ENCODE measurements at regions of chr7 and their contacts with region 1.

Region 1: GRCh38 chr7:155598810-155599210 is 45.7 kb upstream of the RBM33 start:
- DNase-seq: no peak
- H3K4me3 ChIP-seq: no peak overlapping the region
- H3K27me3 ChIP-seq: peaks cover 4% of the 10 kb centered on the region
- CTCF ChIP-seq: peak; percentile 98

Region 2: GRCh38 chr7:154566877-154567276 is 1031.9 kb before region 1 on chr7:
- CTCF ChIA-PET with region 1: no interaction called
- POLR2A ChIA-PET with region 1: no interaction called
- DNase-seq: no peak
- H3K4me3 ChIP-seq: no peak overlapping the region
- H3K27me3 ChIP-seq: no peaks in the 10 kb centered on the region
- CTCF ChIP-seq: no peak

Region 3: GRCh38 chr7:155566011-155566836 is 32.6 kb before region 1 on chr7:
- CTCF ChIA-PET with region 1: no interaction called
- POLR2A ChIA-PET with region 1: no interaction called
- DNase-seq: no peak
- H3K4me3 ChIP-seq: no peak overlapping the region
- H3K27me3 ChIP-seq: 0 out of 2 replicates have a peak, but pooled peaks cover 1% of the 10 kb centered on the region
- CTCF ChIP-seq: no peak

Region 4: GRCh38 chr7:155584763-155585531 is 13.9 kb before region 1 on chr7:
- CTCF ChIA-PET with region 1: interaction called, 36 read pairs
- POLR2A ChIA-PET with region 1: no interaction called
- DNase-seq: peak; percentile 15
- H3K4me3 ChIP-seq: no peak overlapping the region
- H3K27me3 ChIP-seq: peaks cover 2% of the 10 kb centered on the region
- CTCF ChIP-seq: 0 out of 2 replicates have a peak, but pooled peaks have one; percentile 4

Region 5: DNA sequence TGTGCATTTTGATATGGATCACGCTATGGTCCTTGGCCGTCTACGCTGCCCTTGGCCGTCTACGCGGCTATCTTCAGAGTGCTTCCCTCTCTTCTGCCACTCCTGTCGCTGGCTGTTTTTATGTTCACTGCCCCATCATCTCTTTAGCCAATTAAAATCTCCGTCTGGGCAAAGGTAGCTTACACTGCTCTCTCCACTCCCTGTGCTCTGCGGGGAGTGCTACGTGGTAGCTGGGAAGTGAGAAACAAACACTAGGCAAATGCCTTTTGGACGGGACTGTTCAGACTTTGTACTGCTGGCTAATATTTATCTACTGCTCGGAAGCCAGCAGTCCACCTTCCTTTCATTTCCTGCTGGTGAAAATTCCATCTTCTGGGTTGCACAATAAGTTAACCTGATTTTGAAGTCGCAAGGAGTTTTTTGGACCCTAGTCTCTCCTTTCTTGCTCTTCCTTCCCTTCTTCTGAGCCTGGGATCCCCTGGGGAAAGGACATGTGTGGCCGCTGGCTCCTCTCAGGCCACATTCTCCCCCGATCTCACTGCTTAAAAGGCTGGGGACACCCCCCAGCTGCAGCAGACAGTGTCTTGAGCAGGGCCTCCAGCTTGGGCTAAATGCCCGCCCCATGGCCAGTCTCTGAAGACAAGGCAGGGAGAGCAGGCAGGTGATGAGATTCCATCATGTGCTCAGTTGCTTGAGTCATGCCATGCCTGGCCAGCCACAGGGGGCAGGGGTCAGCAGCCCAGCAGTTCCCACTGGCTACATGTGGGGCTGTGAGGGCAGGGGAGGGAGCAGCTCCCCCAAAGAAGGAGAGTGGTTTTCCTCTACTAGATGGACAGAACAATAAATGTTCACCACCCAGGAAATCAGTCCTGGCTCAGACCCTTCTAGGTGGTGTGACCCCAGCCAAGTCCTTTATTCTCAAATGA is 20.2 kb after region 1 on chr7:
- CTCF ChIA-PET with region 1: interaction called, 19 read pairs
- POLR2A ChIA-PET with region 1: no interaction called
- DNase-seq: no peak
- H3K4me3 ChIP-seq: no peak overlapping the region
- H3K27me3 ChIP-seq: peaks cover 2% of the 10 kb centered on the region
- CTCF ChIP-seq: no peak

Region 6: DNA sequence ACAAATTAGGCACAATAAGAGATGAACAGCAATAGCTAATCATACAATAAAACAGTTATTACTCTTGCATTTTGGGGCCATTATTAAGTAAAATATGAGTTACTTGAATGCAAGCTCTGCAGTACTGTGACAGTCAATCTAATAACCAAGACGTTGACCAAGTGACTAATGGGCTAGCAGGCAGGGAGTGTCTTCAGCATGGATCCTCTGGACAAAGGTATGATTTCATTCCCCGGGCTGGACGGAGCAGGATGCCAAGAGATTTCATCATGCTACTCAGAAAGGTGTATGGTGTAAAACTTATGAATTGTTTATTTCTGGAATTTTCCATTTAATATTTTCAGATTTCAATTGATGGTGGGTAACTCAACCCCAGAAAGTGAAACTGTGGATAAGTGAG is 132.6 kb after region 1 on chr7:
- CTCF ChIA-PET with region 1: interaction called, 104 read pairs
- POLR2A ChIA-PET with region 1: no interaction called
- DNase-seq: no peak
- H3K4me3 ChIP-seq: no peak overlapping the region
- H3K27me3 ChIP-seq: no peaks in the 10 kb centered on the region
- CTCF ChIP-seq: no peak

Region 7: GRCh38 chr7:155762655-155763054 is 163.8 kb after region 1 on chr7:
- CTCF ChIA-PET with region 1: interaction called, 40 read pairs
- POLR2A ChIA-PET with region 1: no interaction called
- DNase-seq: no peak
- H3K4me3 ChIP-seq: no peak overlapping the region
- H3K27me3 ChIP-seq: no peaks in the 10 kb centered on the region
- CTCF ChIP-seq: no peak

Region 8: GRCh38 chr7:155796381-155797261 is 197.8 kb after region 1 on chr7:
- CTCF ChIA-PET with region 1: no interaction called
- POLR2A ChIA-PET with region 1: no interaction called
- DNase-seq: no peak
- H3K4me3 ChIP-seq: no peak overlapping the region
- H3K27me3 ChIP-seq: peaks cover 10% of the 10 kb centered on the region
- CTCF ChIP-seq: peak; percentile 92

Region 9: GRCh38 chr7:155995183-155995612 is 396.4 kb after region 1 on chr7:
- CTCF ChIA-PET with region 1: no interaction called
- POLR2A ChIA-PET with region 1: no interaction called
- DNase-seq: no peak
- H3K4me3 ChIP-seq: no peak overlapping the region
- H3K27me3 ChIP-seq: no peaks in the 10 kb centered on the region
- CTCF ChIP-seq: no peak

Measured in BJ (cell line).